IMR-90 (cell line): ENCODE measurements at regions of chr14 and their contacts with region 1.

Region 1: DNA sequence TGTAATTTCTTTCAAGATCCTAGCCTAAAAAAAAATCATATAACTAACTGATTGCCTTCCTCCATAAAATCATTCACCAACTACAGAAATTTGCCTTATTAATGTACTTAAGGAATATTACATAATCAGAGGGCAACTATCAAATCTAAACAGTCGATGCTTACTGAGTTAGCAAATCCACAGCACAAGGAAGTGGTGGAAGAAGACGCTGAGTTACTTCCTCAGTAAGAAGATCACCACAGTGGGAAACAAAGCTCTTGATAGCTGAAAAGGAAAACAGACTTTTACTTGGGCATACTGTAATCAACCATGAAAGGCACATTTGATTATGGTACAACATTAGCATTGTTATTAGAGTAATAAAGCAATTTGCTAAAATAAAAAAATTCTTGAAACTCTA is 48.7 kb downstream of the HEATR5A start:
- DNase-seq: no peak
- ATAC-seq: no peak
- H3K4me3 ChIP-seq: no peak overlapping the region
- H3K27ac ChIP-seq: no peak overlapping the region
- H3K4me1 ChIP-seq: no peaks in the 10 kb centered on the region
- H3K27me3 ChIP-seq: no peaks in the 10 kb centered on the region
- CTCF ChIP-seq: no peak
- POLR2A ChIP-seq: no peak
- RAD21 ChIP-seq: no peak

Region 2: GRCh38 chr14:29911815-29912214 is 1459.8 kb before region 1 on chr14:
- CTCF ChIA-PET with region 1: no interaction called
- POLR2A ChIA-PET with region 1: no interaction called
- dilution Hi-C with region 1: no loop called
- in situ Hi-C with region 1: no loop called
- intact Hi-C with region 1: no loop called
- DNase-seq: no peak
- ATAC-seq: no peak
- H3K4me3 ChIP-seq: no peak overlapping the region
- H3K27ac ChIP-seq: no peak overlapping the region
- H3K4me1 ChIP-seq: no peaks in the 10 kb centered on the region
- H3K27me3 ChIP-seq: no peaks in the 10 kb centered on the region
- CTCF ChIP-seq: no peak
- POLR2A ChIP-seq: no peak
- RAD21 ChIP-seq: no peak

Region 3: DNA sequence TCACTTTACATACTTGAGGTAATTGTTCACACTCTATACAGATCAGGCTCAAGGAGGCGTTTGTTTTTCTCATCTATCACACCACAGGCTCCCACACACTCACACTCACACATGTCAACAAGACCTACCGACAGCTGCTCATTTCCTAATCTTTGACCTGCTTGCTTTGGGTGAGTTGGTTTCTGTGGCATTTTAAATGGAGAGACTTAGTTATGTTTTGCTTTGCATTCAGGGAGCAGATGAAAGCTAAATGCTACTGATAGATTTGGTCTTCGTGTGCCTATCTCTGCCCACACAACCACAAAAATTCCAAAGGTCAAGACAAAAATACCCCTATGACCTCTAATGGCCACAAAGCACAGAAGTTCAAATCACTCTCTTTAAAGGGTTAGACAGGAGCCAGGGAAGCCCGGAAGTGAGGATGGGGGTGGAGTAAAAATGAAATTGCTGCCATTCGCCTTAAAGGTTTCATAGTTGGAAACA is 1016.2 kb before region 1 on chr14:
- CTCF ChIA-PET with region 1: no interaction called
- POLR2A ChIA-PET with region 1: no interaction called
- dilution Hi-C with region 1: no loop called
- in situ Hi-C with region 1: no loop called
- intact Hi-C with region 1: no loop called
- DNase-seq: no peak
- ATAC-seq: no peak
- H3K4me3 ChIP-seq: no peak overlapping the region
- H3K27ac ChIP-seq: no peak overlapping the region
- H3K4me1 ChIP-seq: no peaks in the 10 kb centered on the region
- H3K27me3 ChIP-seq: peaks cover 6% of the 10 kb centered on the region
- CTCF ChIP-seq: no peak
- POLR2A ChIP-seq: no peak
- RAD21 ChIP-seq: no peak

Region 4: DNA sequence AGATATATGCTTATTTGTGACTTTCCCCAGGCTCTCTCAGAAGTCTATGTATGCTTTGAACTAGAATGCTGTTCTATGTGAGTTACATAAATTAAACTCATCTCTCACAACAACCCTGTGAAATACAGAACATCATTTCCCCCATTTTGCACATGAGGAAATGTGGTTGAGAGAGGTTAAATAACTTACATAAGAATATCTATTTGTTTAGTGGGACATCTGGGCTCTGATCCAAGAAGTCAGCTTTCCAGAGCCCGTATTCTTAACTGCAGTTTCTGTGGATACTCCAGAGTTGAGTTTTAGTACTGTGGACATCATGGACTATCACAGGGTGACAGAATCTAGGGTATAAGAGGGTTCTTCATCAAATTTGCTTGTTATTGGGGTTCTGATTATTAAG is 463.0 kb after region 1 on chr14:
- CTCF ChIA-PET with region 1: no interaction called
- POLR2A ChIA-PET with region 1: interaction called, 10 read pairs
- dilution Hi-C with region 1: no loop called
- in situ Hi-C with region 1: no loop called
- intact Hi-C with region 1: no loop called
- DNase-seq: peak; percentile 52
- ATAC-seq: peak; percentile 11; the same call in 1 of the 2 replicates
- H3K4me3 ChIP-seq: no peak overlapping the region
- H3K27ac ChIP-seq: no peak overlapping the region
- H3K4me1 ChIP-seq: peaks cover 4% of the 10 kb centered on the region
- H3K27me3 ChIP-seq: no peaks in the 10 kb centered on the region
- CTCF ChIP-seq: no peak
- POLR2A ChIP-seq: no peak
- RAD21 ChIP-seq: no peak